Cardiac septum (tissue), 1 donor: ENCODE measurements at regions of chr17 and their contacts with region 1.

Region 1: GRCh38 chr17:28335201-28335955 is at the starts of genes IFT20 and TNFAIP1:
- DNase-seq: peak; percentile 99
- total RNA-seq, gene IFT20: 17.3 TPM
- total RNA-seq, gene TNFAIP1: 58.5 TPM

Region 2: GRCh38 chr17:28357061-28357900 is 21.9 kb after region 1 on chr17 and contains the start of gene POLDIP2:
- intact Hi-C with region 1: loop called (anchors 1 kb)
- DNase-seq: peak; percentile 98
- total RNA-seq, gene POLDIP2: 127 TPM

Region 3: GRCh38 chr17:28371245-28372202 is 36.1 kb after region 1 on chr17 and contains the start of gene SARM1:
- intact Hi-C with region 1: loop called (anchors 5 kb)
- DNase-seq: peak; percentile 94
- total RNA-seq, gene SARM1: 10.4 TPM